Naive thymus-derived CD4-positive, alpha-beta T cell (primary cell): ENCODE measurements at regions of chr20 and their contacts with region 1.

Region 1: GRCh38 chr20:1185790-1186334 is 1.1 kb upstream of the TMEM74B start:
- DNase-seq: peak; percentile 18 to 64 (median 36)
- ATAC-seq: peak; percentile 65
- H3K4me3 ChIP-seq: no peak overlapping the region
- H3K4me3 Mint-ChIP-seq: peak overlapping the region in 9 of 10 donors; percentile 49 to 83 (median 73)
- H3K27ac ChIP-seq: no peak overlapping the region
- H3K27ac Mint-ChIP-seq: peak overlapping the region in 2 of 9 donors; percentile 44 to 86
- H3K4me1 ChIP-seq: no peaks in the 10 kb centered on the region
- H3K4me1 Mint-ChIP-seq: peaks cover 7 to 13% (median 11%) of the 10 kb centered on the region in 7 donors
- H3K27me3 ChIP-seq: peaks cover 0 to 3% of the 10 kb centered on the region in 2 donors
- H3K27me3 Mint-ChIP-seq: peaks cover 19 to 51% (median 33%) of the 10 kb centered on the region in 5 donors

Region 2: DNA sequence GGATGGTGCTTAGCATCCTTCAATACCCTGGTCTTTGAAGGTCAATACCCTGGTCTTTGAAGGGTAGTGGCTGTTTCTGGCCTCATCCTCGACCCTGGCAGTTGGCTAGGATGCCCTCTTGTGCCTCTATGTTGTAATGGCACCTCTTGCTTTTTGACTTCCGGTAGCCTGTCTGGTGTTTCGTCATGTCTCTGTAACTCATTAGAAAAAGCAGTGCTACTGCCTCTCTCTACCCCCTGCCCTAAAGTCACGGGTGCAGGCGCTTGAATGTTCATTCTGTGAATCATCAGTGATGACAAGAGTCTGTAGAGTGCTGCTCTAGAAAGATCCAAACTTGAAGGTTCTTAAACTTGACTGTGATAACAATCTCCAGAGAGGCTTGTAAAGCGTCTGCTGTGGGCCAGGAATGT is 212.1 kb before region 1 on chr20:
- CTCF ChIA-PET with region 1: no interaction called
- POLR2A ChIA-PET with region 1: no interaction called
- intact Hi-C with region 1: loop called in 1 of 2 experiments (anchors 5 kb)
- DNase-seq: peak in 5 of 9 donors; percentile 13 to 39 (median 26)
- ATAC-seq: peak; percentile 82
- H3K4me3 ChIP-seq: no peak overlapping the region
- H3K4me3 Mint-ChIP-seq: no peak overlapping the region
- H3K27ac ChIP-seq: no peak overlapping the region
- H3K27ac Mint-ChIP-seq: peak overlapping the region in 1 of 9 donors; percentile 37
- H3K4me1 ChIP-seq: no peaks in the 10 kb centered on the region
- H3K4me1 Mint-ChIP-seq: peaks cover 0 to 4% (median 2%) of the 10 kb centered on the region in 7 donors
- H3K27me3 ChIP-seq: no peaks in the 10 kb centered on the region
- H3K27me3 Mint-ChIP-seq: peaks cover 0 to 7% (median 0%) of the 10 kb centered on the region in 5 donors

Region 3: GRCh38 chr20:1108437-1108920 is 77.4 kb before region 1 on chr20:
- CTCF ChIA-PET with region 1: interaction called, 3 read pairs
- POLR2A ChIA-PET with region 1: no interaction called
- intact Hi-C with region 1: loop called in 1 of 2 experiments (anchors 2 kb)
- DNase-seq: peak in 8 of 9 donors; percentile 18 to 51 (median 43)
- ATAC-seq: peak; percentile 87
- H3K4me3 ChIP-seq: no peak overlapping the region
- H3K4me3 Mint-ChIP-seq: no peak overlapping the region
- H3K27ac ChIP-seq: no peak overlapping the region
- H3K27ac Mint-ChIP-seq: peak overlapping the region in 1 of 9 donors; percentile 60
- H3K4me1 ChIP-seq: no peaks in the 10 kb centered on the region
- H3K4me1 Mint-ChIP-seq: peaks cover 5 to 7% (median 6%) of the 10 kb centered on the region in 7 donors
- H3K27me3 ChIP-seq: no peaks in the 10 kb centered on the region
- H3K27me3 Mint-ChIP-seq: peaks cover 0 to 10% (median 0%) of the 10 kb centered on the region in 5 donors